Heart left ventricle (tissue), 16 donors: ENCODE measurements at regions of chr1 and their contacts with region 1.

Region 1: DNA sequence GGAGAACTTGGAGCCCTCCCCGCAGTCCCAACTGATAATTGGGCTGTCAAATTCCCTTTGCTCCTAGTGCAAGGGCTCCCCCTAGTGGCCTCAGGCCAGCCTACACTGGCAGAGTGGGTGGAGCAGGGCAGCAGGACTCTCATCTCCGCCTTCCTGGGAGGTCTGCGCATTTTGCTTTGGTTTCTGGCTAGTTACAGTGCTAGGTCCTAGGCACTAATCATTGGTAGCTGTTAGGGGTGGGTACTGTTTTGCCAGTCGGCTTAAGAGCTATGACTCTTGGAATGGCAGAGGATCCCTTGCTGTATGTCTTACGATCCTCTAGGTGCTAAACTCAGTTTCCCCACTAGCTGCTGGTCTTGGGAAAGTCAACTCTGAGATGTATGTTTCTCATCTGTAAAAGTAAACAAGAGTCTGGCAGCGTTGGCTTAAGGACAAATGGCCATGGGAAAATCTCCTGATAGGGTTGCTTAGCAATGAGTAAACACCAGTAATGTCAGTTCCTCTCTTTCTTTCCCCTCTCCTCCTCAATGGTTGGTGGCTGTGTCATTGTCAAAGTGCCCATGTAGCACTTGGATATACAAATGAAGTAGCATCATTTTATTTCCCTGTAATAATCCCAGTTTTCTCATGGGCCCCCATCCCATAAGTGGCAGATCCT is 2.1 kb upstream of the FYB2 start:
- DNase-seq: peak; percentile 73 to 86 (median 76)
- ATAC-seq: peak; percentile 38 to 78 (median 67)
- H3K4me3 ChIP-seq: no peak overlapping the region
- H3K27ac ChIP-seq: no peak overlapping the region
- H3K4me1 ChIP-seq: peaks cover 0 to 32% (median 8%) of the 10 kb centered on the region in 12 donors
- H3K27me3 ChIP-seq: peaks cover 0 to 3% (median 0%) of the 10 kb centered on the region in 9 donors
- CTCF ChIP-seq: peak; percentile 86 to 97 (median 92)
- POLR2A ChIP-seq: no peak

Region 2: GRCh38 chr1:56644919-56645676 is 176.2 kb before region 1 on chr1 and contains the start of gene PRKAA2:
- intact Hi-C with region 1: loop called in 1 of 10 experiments (anchors 10 kb)
- DNase-seq: peak; percentile 44 to 72 (median 61)
- ATAC-seq: peak; percentile 39 to 93 (median 84)
- H3K4me3 ChIP-seq: peak within 1 kb of the TSS; percentile 42 to 89 (median 64)
- H3K27ac ChIP-seq: peak within 1 kb of the TSS; percentile 73 to 95 (median 88)
- H3K4me1 ChIP-seq: peaks cover 0 to 11% (median 5%) of the 10 kb centered on the region in 12 donors
- H3K27me3 ChIP-seq: peaks cover 0 to 41% (median 0%) of the 10 kb centered on the region in 9 donors
- CTCF ChIP-seq: peak in 1 of 12 donors; percentile 8
- POLR2A ChIP-seq: peak in 1 of 2 donors; percentile 28
- total RNA-seq, gene PRKAA2: 51.3 to 163 (median 114) TPM

Region 3: DNA sequence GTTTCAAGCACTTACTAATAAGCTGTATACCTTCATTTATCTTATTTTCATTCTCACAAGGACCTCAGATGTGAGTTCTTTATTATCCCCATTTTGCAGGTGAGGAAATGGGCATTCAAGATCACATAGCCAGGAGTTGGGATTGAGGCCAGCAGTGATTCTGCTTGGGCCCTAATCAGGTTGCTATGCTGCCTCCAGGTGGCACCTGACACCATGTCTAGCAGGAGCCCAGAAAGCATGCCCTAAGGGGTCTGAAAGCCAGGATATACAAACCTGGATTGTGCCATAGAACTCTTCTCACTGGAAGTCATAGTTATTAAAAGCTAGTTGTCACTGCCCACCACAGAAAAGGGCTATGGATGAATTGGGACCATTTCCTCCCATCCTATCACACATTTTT is 63.1 kb before region 1 on chr1:
- intact Hi-C with region 1: loop called in 5 of 10 experiments (anchors 1 to 5 kb)
- DNase-seq: peak in 4 of 5 donors; percentile 10 to 37 (median 26)
- ATAC-seq: peak in 3 of 4 donors; percentile 72 to 76 (median 74)
- H3K4me3 ChIP-seq: no peak overlapping the region
- H3K27ac ChIP-seq: no peak overlapping the region
- H3K4me1 ChIP-seq: peaks cover 0 to 4% (median 0%) of the 10 kb centered on the region in 12 donors
- H3K27me3 ChIP-seq: peaks cover 0 to 3% (median 0%) of the 10 kb centered on the region in 9 donors
- CTCF ChIP-seq: peak in 8 of 12 donors; percentile 22 to 46 (median 34)
- POLR2A ChIP-seq: no peak

Region 4: DNA sequence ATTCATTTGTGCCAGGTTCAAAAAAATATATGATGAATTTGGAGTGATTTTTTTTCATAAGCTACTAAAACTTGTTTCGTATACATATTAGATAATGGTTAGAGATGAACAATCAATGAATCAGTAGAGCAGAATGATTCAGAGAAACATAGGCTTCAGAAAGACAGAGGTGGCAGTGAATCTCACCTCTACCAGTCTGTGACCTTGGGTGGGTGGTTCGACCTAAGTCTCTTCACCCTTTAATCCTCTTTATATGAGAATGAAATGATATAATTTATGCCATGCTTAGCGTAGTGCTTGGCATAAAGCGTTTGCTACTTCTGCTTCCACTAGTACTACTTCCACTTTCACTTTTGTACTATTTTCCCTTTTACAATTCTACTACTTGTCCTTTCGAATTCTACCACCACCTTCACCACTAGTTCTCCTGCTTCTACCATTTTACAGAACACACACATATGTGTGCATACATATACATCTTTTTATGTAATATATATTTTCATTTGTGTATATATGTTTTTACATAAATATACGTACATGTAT is 47.1 kb before region 1 on chr1:
- intact Hi-C with region 1: no loop called
- DNase-seq: no peak
- ATAC-seq: no peak
- H3K4me3 ChIP-seq: peak overlapping the region in 1 of 12 donors; percentile 37
- H3K27ac ChIP-seq: no peak overlapping the region
- H3K4me1 ChIP-seq: no peaks in the 10 kb centered on the region
- H3K27me3 ChIP-seq: no peaks in the 10 kb centered on the region
- CTCF ChIP-seq: no peak
- POLR2A ChIP-seq: no peak

Region 5: GRCh38 chr1:58047265-58047858 is 1226.1 kb after region 1 on chr1:
- intact Hi-C with region 1: loop called in 2 of 10 experiments (anchors 5 to 10 kb)
- DNase-seq: no peak
- ATAC-seq: peak in 1 of 4 donors; percentile 61
- H3K4me3 ChIP-seq: no peak overlapping the region
- H3K27ac ChIP-seq: no peak overlapping the region
- H3K4me1 ChIP-seq: no peaks in the 10 kb centered on the region
- H3K27me3 ChIP-seq: no peaks in the 10 kb centered on the region
- CTCF ChIP-seq: peak; percentile 49 to 77 (median 62)
- POLR2A ChIP-seq: no peak